T-cell (primary cell): ENCODE measurements at regions of chr10 and their contacts with region 1.

Region 1: GRCh38 chr10:29039677-29040189 is 249.1 kb upstream of the LYZL1 start:
- DNase-seq: no peak
- ATAC-seq: no peak
- H3K4me3 ChIP-seq: no peak overlapping the region
- H3K4me3 Mint-ChIP-seq: no peak overlapping the region
- H3K27ac ChIP-seq: no peak overlapping the region
- H3K27ac Mint-ChIP-seq: no peak overlapping the region
- H3K4me1 ChIP-seq: no peaks in the 10 kb centered on the region
- H3K4me1 Mint-ChIP-seq: no peaks in the 10 kb centered on the region
- H3K27me3 ChIP-seq: no peaks in the 10 kb centered on the region
- H3K27me3 Mint-ChIP-seq: peaks cover 3 to 19% of the 10 kb centered on the region in 2 donors

Region 2: GRCh38 chr10:28997739-28998138 is 42.0 kb before region 1 on chr10:
- CTCF ChIA-PET with region 1: no interaction called
- POLR2A ChIA-PET with region 1: no interaction called
- DNase-seq: no peak
- ATAC-seq: no peak
- H3K4me3 ChIP-seq: no peak overlapping the region
- H3K4me3 Mint-ChIP-seq: no peak overlapping the region
- H3K27ac ChIP-seq: no peak overlapping the region
- H3K27ac Mint-ChIP-seq: no peak overlapping the region
- H3K4me1 ChIP-seq: no peaks in the 10 kb centered on the region
- H3K4me1 Mint-ChIP-seq: no peaks in the 10 kb centered on the region
- H3K27me3 ChIP-seq: no peaks in the 10 kb centered on the region
- H3K27me3 Mint-ChIP-seq: peaks cover 2 to 8% of the 10 kb centered on the region in 2 donors

Region 3: DNA sequence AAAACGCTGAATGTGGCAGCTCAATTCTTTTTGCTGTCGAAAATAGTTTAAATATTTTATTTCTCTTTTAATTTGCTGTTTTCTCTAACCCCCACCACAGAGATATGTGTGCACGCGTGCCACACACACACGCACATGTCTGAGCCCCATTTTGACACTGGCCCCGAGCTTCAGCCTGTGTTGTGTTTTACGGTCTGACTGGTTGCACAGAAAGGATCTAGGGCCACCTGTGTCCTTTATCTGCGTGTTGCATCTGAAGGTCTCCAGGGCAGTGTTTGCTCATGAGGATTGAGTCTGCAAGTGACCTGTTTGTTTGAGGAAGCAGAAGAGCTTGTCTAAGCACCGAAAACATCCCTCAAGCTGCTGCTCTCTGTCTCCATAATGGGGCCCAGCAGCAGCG is 17.3 kb before region 1 on chr10:
- CTCF ChIA-PET with region 1: no interaction called
- POLR2A ChIA-PET with region 1: interaction called in 1 of 2 experiments, 12 read pairs
- DNase-seq: no peak
- ATAC-seq: no peak
- H3K4me3 ChIP-seq: no peak overlapping the region
- H3K4me3 Mint-ChIP-seq: no peak overlapping the region
- H3K27ac ChIP-seq: no peak overlapping the region
- H3K27ac Mint-ChIP-seq: no peak overlapping the region
- H3K4me1 ChIP-seq: no peaks in the 10 kb centered on the region
- H3K4me1 Mint-ChIP-seq: no peaks in the 10 kb centered on the region
- H3K27me3 ChIP-seq: no peaks in the 10 kb centered on the region
- H3K27me3 Mint-ChIP-seq: peaks cover 0 to 11% of the 10 kb centered on the region in 2 donors

Region 4: GRCh38 chr10:29119374-29119773 is 79.6 kb after region 1 on chr10:
- CTCF ChIA-PET with region 1: no interaction called
- POLR2A ChIA-PET with region 1: no interaction called
- DNase-seq: no peak
- ATAC-seq: no peak
- H3K4me3 ChIP-seq: no peak overlapping the region
- H3K4me3 Mint-ChIP-seq: no peak overlapping the region
- H3K27ac ChIP-seq: no peak overlapping the region
- H3K27ac Mint-ChIP-seq: no peak overlapping the region
- H3K4me1 ChIP-seq: no peaks in the 10 kb centered on the region
- H3K4me1 Mint-ChIP-seq: no peaks in the 10 kb centered on the region
- H3K27me3 ChIP-seq: peaks cover 0 to 6% of the 10 kb centered on the region in 2 experiments
- H3K27me3 Mint-ChIP-seq: peaks cover 0 to 3% of the 10 kb centered on the region in 2 donors